Calu3 (cell line): ENCODE measurements at regions of chr5 and their contacts with region 1.

Region 1: GRCh38 chr5:42889311-42889933 is 77.7 kb upstream of the SELENOP start:
- DNase-seq: peak; percentile 86
- H3K4me3 Mint-ChIP-seq: no peak overlapping the region
- H3K27ac Mint-ChIP-seq: no peak overlapping the region
- H3K4me1 Mint-ChIP-seq: no peaks in the 10 kb centered on the region
- H3K27me3 Mint-ChIP-seq: no peaks in the 10 kb centered on the region
- CTCF ChIP-seq: peak; percentile 69

Region 2: DNA sequence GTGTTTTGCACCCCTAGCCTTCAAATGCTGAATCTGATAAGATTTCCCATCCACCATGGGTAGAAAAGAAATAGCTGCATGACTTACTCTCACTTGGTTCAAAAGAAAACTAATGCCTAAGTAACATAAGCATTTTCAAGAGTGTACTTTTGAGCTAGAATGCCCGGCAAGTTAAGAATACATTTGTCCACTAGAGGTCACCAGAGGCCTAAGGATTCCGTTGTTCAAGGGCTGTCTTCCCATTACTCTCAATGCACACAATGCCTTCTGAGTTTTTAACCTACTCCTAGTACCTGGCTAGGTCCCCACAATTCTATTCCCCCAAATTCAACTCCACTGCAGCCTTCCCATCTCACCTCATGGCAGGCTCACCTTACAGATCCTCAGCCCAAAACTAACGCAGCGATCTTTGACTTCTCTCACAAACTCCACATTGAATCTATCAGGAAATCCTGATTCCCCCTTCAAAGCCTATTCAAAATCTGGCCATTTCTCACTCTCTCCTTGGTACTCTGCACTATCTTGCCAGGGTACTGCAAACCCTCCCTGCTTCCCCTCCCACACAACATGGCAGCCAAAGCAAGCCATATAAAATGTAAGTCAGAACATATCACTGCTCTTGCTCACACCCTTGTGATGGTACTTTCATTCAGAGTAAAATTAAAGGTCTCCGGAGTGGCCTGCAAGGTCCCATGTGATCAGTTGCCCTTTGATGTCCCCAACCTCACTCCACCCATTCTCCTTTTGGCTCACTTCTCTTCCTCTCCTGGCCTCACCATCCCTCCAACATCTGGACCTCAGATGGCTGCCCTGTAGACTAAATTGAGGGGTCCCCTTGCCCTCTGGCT is 1032.6 kb before region 1 on chr5:
- CTCF ChIA-PET with region 1: interaction called, 3 read pairs
- intact Hi-C with region 1: loop called (anchors 10 kb)
- DNase-seq: peak; percentile 60
- H3K4me3 Mint-ChIP-seq: no peak overlapping the region
- H3K27ac Mint-ChIP-seq: no peak overlapping the region
- H3K4me1 Mint-ChIP-seq: no peaks in the 10 kb centered on the region
- H3K27me3 Mint-ChIP-seq: no peaks in the 10 kb centered on the region
- CTCF ChIP-seq: peak; percentile 46

Region 3: DNA sequence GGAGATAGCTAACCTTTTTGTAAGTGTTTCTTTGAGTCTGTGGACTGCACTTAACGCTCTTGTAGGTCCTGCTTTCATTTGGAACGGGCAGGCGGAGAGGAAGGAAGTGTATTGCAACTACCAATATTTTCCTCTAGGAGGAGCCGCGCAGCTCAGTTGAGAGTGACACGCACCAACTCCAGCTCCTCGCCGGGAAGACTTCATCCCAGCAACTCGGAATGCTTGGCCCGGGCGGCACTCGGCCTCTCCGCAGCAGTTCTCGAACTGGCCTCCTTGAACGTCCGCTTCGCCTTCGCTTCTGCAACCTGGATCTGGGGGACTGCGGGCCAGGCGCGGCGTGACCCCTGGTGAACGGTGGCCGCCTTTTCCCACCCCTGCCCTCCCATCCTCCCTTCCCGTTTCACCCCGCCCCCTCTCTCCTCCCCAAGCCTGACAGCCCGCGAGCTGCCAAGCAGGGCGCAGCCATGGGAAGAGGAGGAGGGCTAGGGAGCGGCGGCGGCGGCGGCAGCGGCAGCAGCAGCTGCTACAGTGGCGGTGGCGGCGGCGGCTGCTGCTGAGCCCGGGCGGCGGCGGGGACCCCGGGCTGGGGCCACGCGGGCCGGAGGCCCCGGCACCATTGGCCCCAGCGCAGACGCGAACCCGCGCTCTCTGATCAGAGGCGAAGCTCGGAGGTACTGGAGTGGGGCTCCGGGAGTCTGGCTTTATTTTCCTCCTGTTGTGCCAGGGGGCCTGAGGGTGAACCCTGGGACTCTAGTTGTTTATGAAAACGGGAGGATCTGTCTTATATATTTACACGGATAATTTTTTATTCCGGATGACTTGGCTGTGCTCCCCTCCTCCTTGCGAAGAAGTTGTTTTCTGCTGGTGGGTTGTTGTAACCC is 465.9 kb before region 1 on chr5 and contains the start of gene GHR:
- CTCF ChIA-PET with region 1: no interaction called
- intact Hi-C with region 1: loop called (anchors 1 kb)
- DNase-seq: peak; percentile 77
- H3K4me3 Mint-ChIP-seq: no peak within 1 kb of the TSS
- H3K27ac Mint-ChIP-seq: no peak within 1 kb of the TSS
- H3K4me1 Mint-ChIP-seq: no peaks in the 10 kb centered on the region
- H3K27me3 Mint-ChIP-seq: peaks cover 12% of the 10 kb centered on the region
- CTCF ChIP-seq: peak; percentile 77
- total RNA-seq, gene GHR: 0.45 and 0.69 TPM in 2 replicates

Region 4: GRCh38 chr5:42583322-42583721 is 306.1 kb before region 1 on chr5:
- CTCF ChIA-PET with region 1: interaction called, 7 read pairs
- intact Hi-C with region 1: loop called (anchors 1 kb)
- DNase-seq: peak; percentile 56
- H3K4me3 Mint-ChIP-seq: no peak overlapping the region
- H3K27ac Mint-ChIP-seq: no peak overlapping the region
- H3K4me1 Mint-ChIP-seq: no peaks in the 10 kb centered on the region
- H3K27me3 Mint-ChIP-seq: peaks cover 60% of the 10 kb centered on the region
- CTCF ChIP-seq: peak; percentile 58

Region 5: DNA sequence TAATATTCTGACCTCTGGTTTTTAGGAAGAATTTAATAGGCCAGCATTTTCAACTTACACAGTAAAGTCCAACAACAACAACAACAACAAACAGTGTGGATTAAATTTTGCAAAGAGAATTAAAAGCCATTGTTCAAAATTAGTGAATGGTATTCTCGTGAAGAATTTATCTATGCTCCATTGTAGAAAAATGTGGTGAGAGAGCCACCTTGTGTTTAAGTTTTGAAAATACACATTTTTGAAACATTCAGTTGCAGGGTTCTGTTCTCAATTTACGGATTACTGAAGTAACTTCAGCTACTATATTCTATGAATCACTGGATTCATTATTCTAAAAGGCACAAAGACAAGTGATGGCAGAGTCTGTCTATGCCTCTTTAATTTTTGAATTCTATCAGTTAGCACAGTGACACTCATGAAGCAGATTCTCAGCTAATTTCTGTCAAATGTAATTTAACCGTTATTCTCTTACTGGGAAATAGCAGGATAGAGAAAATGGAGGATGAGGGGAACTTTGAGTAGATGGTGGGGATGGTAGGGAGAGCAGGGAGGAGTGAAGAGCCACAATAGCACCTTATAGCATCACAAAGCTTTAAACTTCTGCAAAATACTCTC is 121.8 kb before region 1 on chr5:
- CTCF ChIA-PET with region 1: interaction called, 7 read pairs
- intact Hi-C with region 1: loop called (anchors 1 kb)
- DNase-seq: no peak
- H3K4me3 Mint-ChIP-seq: no peak overlapping the region
- H3K27ac Mint-ChIP-seq: no peak overlapping the region
- H3K4me1 Mint-ChIP-seq: peaks cover 10% of the 10 kb centered on the region
- H3K27me3 Mint-ChIP-seq: no peaks in the 10 kb centered on the region
- CTCF ChIP-seq: peak; percentile 39

Region 6: DNA sequence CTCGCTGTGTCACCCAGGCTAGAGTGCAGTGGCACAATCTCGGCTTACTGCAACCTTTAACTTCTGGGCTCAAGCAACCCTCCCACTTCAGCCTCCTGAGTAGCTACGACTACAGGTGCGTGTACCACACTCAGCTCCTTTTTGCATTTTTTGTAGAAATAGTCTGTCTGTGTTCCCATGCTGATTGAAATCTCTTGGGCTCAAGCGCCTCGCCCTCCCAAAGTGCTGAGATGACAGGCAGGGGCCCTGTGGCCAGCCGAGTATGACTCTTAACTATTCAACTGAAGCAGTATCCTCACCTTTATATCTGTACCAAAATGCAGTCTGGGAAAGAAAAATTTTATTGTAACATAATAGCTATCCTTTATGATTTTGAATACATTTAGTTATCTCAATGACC is 290.4 kb after region 1 on chr5:
- CTCF ChIA-PET with region 1: no interaction called
- intact Hi-C with region 1: no loop called
- DNase-seq: no peak
- H3K4me3 Mint-ChIP-seq: no peak overlapping the region
- H3K27ac Mint-ChIP-seq: no peak overlapping the region
- H3K4me1 Mint-ChIP-seq: no peaks in the 10 kb centered on the region
- H3K27me3 Mint-ChIP-seq: no peaks in the 10 kb centered on the region
- CTCF ChIP-seq: no peak